ENCODE measurements at regions of chr5 and their contacts with region 1.

Region 1: DNA sequence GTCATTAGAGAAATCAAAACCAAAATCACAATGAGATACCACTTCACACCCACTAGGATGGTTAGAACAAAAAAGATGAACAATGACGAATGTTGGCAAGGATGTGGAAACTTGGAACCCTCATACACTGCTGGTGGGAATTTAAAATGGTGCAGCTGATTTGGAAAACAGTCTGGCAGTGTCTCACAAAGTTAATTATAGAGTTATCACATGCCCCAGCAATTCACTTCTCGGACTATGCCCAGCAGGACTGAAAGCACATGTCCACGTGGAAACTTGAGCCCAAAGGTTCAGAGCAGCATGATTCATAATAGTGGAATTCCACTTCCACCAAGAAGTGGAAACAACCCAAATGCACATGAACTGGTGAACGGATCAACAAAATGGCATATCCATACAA is 85.0 kb upstream of the HRH2 start:
- DNase-seq: peak in 1 of 2 donors; percentile 56
- ATAC-seq: no peak
- H3K4me3 ChIP-seq: no peak overlapping the region
- H3K27ac ChIP-seq: no peak overlapping the region
- H3K4me1 ChIP-seq: no peaks in the 10 kb centered on the region
- H3K27me3 ChIP-seq: no peaks in the 10 kb centered on the region

Region 2: GRCh38 chr5:175335691-175336090 is 237.2 kb before region 1 on chr5:
- intact Hi-C with region 1: no loop called
- DNase-seq: no peak
- ATAC-seq: no peak
- H3K4me3 ChIP-seq: no peak overlapping the region
- H3K27ac ChIP-seq: no peak overlapping the region
- H3K4me1 ChIP-seq: no peaks in the 10 kb centered on the region
- H3K27me3 ChIP-seq: no peaks in the 10 kb centered on the region

Region 3: DNA sequence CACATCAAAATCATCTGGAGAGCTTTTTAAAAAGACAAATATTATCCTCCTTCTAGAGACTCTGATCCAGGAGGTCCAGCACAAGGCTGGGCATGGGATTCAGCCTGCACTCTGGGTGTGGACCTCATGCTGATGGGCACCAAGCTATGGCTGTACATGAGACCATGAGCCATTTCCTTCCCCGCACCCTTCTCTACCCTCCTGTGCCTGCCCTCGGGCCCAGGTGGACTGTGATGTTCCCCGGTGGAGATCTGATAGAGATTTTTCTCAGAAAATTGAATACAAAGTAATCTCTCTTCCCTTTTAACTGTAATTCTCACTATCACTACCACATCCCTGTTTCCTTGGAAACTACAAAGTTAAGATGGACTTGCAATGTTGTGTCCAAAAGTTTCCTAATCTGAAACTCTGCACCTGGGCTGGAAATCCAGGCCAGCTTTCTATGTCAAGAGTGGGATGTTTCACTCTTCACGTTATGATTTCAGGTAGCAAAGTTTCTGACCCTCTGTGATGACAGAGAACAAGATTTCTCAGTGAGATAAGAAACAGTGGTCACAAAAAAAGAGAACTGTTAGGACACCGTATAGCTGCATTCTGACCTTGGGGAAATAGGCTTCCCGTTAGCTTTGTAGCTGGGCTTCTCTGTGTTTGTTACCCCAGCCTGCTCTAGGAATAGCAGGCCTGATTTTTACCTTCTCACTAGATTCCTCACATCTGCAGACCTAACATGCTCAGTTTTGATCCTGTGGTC is 83.0 kb before region 1 on chr5:
- intact Hi-C with region 1: no loop called
- DNase-seq: no peak
- ATAC-seq: no peak
- H3K4me3 ChIP-seq: no peak overlapping the region
- H3K27ac ChIP-seq: no peak overlapping the region
- H3K4me1 ChIP-seq: no peaks in the 10 kb centered on the region
- H3K27me3 ChIP-seq: no peaks in the 10 kb centered on the region

Region 4: GRCh38 chr5:175652741-175653663 is 80.1 kb after region 1 on chr5:
- intact Hi-C with region 1: loop called in 1 of 2 experiments (anchors 5 kb)
- DNase-seq: no peak
- ATAC-seq: no peak
- H3K4me3 ChIP-seq: no peak overlapping the region
- H3K27ac ChIP-seq: no peak overlapping the region
- H3K4me1 ChIP-seq: no peaks in the 10 kb centered on the region
- H3K27me3 ChIP-seq: no peaks in the 10 kb centered on the region

Region 5: GRCh38 chr5:176183321-176184074 is 610.6 kb after region 1 on chr5:
- intact Hi-C with region 1: no loop called
- DNase-seq: no peak
- ATAC-seq: no peak
- H3K4me3 ChIP-seq: no peak overlapping the region
- H3K27ac ChIP-seq: no peak overlapping the region
- H3K4me1 ChIP-seq: no peaks in the 10 kb centered on the region
- H3K27me3 ChIP-seq: no peaks in the 10 kb centered on the region